AG04450 (cell line): ENCODE measurements at regions of chr18 and their contacts with region 1.

Region 1: GRCh38 chr18:5546660-5547059 is 2.9 kb upstream of the EPB41L3 start:
- DNase-seq: peak; percentile 23
- H3K4me3 ChIP-seq: no peak overlapping the region
- H3K27ac ChIP-seq: no peak overlapping the region
- H3K27me3 ChIP-seq: no peaks in the 10 kb centered on the region
- CTCF ChIP-seq: peak; percentile 75

Region 2: DNA sequence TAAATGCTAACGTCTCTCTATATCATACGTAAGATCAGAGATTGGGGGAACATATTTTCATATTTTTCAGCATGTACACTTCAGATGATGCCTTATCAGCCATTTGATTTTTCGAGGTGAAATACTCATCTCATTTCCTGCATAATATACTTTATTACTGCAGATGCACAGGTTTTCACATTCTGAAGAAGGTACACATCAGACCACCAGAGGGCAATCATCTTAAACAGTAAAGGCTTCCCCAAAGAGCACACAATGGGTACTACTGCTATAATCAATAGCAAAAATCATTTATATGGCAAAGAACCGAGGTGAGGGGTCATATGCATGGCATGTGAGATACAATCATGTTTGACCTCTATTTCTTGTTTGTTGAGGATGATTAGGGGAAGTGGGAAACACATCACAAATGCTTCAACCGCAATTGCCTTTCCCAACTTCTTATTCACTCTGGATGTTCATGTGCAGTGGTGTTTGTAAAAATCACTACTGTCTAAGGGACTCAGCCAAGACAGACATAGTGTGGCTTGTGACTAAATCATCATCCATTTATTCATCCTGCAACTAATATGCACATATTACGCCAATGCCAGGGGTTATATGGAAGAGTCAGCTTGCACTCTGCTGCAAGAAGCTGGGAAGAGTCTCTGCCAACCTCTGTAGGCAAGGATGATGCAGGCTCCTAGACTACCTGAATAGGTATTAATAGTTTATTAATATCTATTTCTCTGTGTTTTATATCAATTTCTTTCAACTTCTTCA is 121.6 kb before region 1 on chr18:
- CTCF ChIA-PET with region 1: interaction called, 24 read pairs
- POLR2A ChIA-PET with region 1: no interaction called
- DNase-seq: no peak
- H3K4me3 ChIP-seq: no peak overlapping the region
- H3K27ac ChIP-seq: no peak overlapping the region
- H3K27me3 ChIP-seq: no peaks in the 10 kb centered on the region
- CTCF ChIP-seq: peak; percentile 69

Region 3: GRCh38 chr18:5456577-5457463 is 89.8 kb before region 1 on chr18:
- CTCF ChIA-PET with region 1: interaction called, 12 read pairs
- POLR2A ChIA-PET with region 1: no interaction called
- DNase-seq: no peak
- H3K4me3 ChIP-seq: no peak overlapping the region
- H3K27ac ChIP-seq: no peak overlapping the region
- H3K27me3 ChIP-seq: no peaks in the 10 kb centered on the region
- CTCF ChIP-seq: peak; percentile 47

Region 4: GRCh38 chr18:5527603-5528002 is 19.1 kb before region 1 on chr18:
- CTCF ChIA-PET with region 1: interaction called, 27 read pairs
- POLR2A ChIA-PET with region 1: no interaction called
- DNase-seq: peak; percentile 65
- H3K4me3 ChIP-seq: no peak overlapping the region
- H3K27ac ChIP-seq: peak overlapping the region; percentile 22
- H3K27me3 ChIP-seq: no peaks in the 10 kb centered on the region
- CTCF ChIP-seq: no peak